Posterior cingulate gyrus (tissue), 11 donors: ENCODE measurements at regions of chr2 and their contacts with region 1.

Region 1: GRCh38 chr2:43227830-43228281 is 1.4 kb upstream of the ZFP36L2 start:
- DNase-seq: no peak

Region 2: GRCh38 chr2:42944779-42945415 is 283.0 kb before region 1 on chr2:
- intact Hi-C with region 1: loop called (anchors 2 kb)
- DNase-seq: peak in 1 of 10 donors; percentile 64

Region 3: GRCh38 chr2:42974721-42975717 is 252.8 kb before region 1 on chr2:
- intact Hi-C with region 1: loop called (anchors 1 kb)
- DNase-seq: peak; percentile 53 to 96 (median 80)

Region 4: GRCh38 chr2:43184339-43184895 is 43.4 kb before region 1 on chr2:
- intact Hi-C with region 1: no loop called
- DNase-seq: no peak

Region 5: GRCh38 chr2:43266711-43267111 is 38.9 kb after region 1 on chr2:
- intact Hi-C with region 1: no loop called
- DNase-seq: peak in 3 of 10 donors; percentile 27 to 85 (median 30)

Region 6: DNA sequence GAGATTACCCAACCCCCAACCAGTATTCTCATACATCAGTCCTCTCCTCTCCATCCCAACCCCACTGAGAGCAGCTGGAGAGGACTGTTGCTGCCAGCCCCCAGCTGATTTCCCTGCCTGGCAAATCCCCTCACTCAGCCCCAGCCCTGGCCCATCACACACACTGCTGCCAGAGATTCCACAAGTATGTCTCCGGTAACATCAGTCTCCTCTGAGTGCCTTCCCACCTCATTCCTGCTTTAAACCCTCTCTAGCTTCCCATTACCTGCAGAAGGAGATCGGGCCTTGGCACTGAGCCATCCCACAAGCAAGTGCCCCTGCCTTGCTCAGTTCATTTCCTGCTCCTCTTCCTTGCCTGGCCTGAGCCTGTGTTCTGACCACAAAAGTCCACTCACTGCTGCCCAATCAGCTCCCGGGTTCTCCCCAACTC is 49.1 kb after region 1 on chr2:
- intact Hi-C with region 1: no loop called
- DNase-seq: no peak